ENCODE measurements at regions of chr7 and their contacts with region 1.

Region 1: GRCh38 chr7:82810558-82811259 is 352.0 kb downstream of the PCLO start:
- DNase-seq: no peak
- ATAC-seq: no peak
- H3K4me3 ChIP-seq: no peak overlapping the region
- H3K27ac ChIP-seq: no peak overlapping the region
- H3K4me1 ChIP-seq: no peaks in the 10 kb centered on the region
- H3K27me3 ChIP-seq: no peaks in the 10 kb centered on the region

Region 2: DNA sequence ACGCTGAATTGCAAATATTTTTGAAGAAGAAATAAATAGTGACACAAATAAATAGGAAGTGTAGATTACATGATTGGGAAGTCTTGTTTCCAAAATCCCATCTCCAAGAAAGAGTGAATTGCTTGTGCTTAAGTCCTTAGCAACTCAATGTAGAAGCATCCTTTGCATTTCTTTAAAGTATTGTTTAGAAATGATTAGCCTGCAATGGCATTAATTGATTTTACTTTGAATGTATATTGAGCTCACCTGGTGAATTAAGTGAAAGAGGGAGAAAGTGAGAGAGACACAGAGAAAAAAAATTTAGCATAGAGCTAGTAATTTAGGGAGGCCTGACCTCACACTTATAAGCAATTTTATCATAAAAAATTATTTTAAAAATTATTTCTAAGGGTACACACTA is 401.0 kb after region 1 on chr7:
- intact Hi-C with region 1: no loop called
- DNase-seq: no peak
- ATAC-seq: no peak
- H3K4me3 ChIP-seq: no peak overlapping the region
- H3K27ac ChIP-seq: no peak overlapping the region
- H3K4me1 ChIP-seq: no peaks in the 10 kb centered on the region
- H3K27me3 ChIP-seq: no peaks in the 10 kb centered on the region

Region 3: GRCh38 chr7:83271212-83272099 is 460.7 kb after region 1 on chr7:
- intact Hi-C with region 1: loop called in 1 of 2 experiments (anchors 5 kb)
- DNase-seq: no peak
- ATAC-seq: no peak
- H3K4me3 ChIP-seq: no peak overlapping the region
- H3K27ac ChIP-seq: no peak overlapping the region
- H3K4me1 ChIP-seq: no peaks in the 10 kb centered on the region
- H3K27me3 ChIP-seq: no peaks in the 10 kb centered on the region

Region 4: GRCh38 chr7:83365746-83366145 is 555.0 kb after region 1 on chr7:
- intact Hi-C with region 1: loop called in 1 of 2 experiments (anchors 10 kb)
- DNase-seq: no peak
- ATAC-seq: no peak
- H3K4me3 ChIP-seq: no peak overlapping the region
- H3K27ac ChIP-seq: no peak overlapping the region
- H3K4me1 ChIP-seq: no peaks in the 10 kb centered on the region
- H3K27me3 ChIP-seq: no peaks in the 10 kb centered on the region